ENCODE measurements at regions of chr2 and their contacts with region 1.

Region 1: GRCh38 chr2:174577967-174578589 is 19.5 kb downstream of the WIPF1 start:
- DNase-seq: peak; percentile 73
- ATAC-seq: peak; percentile 86
- H3K4me3 ChIP-seq: no peak overlapping the region
- H3K27ac ChIP-seq: no peak overlapping the region
- H3K4me1 ChIP-seq: no peaks in the 10 kb centered on the region; the same call in 1 of the 2 replicates
- H3K27me3 ChIP-seq: no peaks in the 10 kb centered on the region
- CTCF ChIP-seq: peak; percentile 86
- POLR2A ChIP-seq: 0 out of 2 replicates have a peak, but pooled peaks have one; percentile 22
- RAD21 ChIP-seq: peak; percentile 90

Region 2: DNA sequence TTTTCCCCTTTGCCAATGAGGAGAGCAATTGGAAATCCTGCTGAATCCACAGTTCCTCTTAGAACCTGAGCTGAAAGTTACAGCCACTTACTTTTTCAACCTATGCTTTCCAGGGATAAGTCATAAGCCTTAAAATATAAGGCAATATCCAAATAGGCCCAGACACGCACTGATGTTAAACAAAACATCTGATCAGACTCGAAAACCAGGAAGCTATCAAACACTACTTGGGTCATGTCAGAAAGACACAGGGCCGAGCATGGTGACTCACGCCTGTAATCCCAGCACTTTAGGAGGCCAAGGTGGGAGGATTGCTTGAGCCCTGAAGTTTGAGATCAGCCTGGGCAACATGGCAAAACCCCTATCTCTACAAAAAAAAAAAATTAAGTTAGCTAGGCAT is 805.0 kb before region 1 on chr2:
- CTCF ChIA-PET with region 1: no interaction called
- POLR2A ChIA-PET with region 1: no interaction called
- dilution Hi-C with region 1: no loop called
- in situ Hi-C with region 1: no loop called
- intact Hi-C with region 1: no loop called
- DNase-seq: no peak
- ATAC-seq: no peak
- H3K4me3 ChIP-seq: no peak overlapping the region
- H3K27ac ChIP-seq: no peak overlapping the region
- H3K4me1 ChIP-seq: no peaks in the 10 kb centered on the region
- H3K27me3 ChIP-seq: peaks cover 16% of the 10 kb centered on the region
- CTCF ChIP-seq: no peak
- POLR2A ChIP-seq: no peak
- RAD21 ChIP-seq: no peak

Region 3: GRCh38 chr2:174688079-174688478 is 110.0 kb after region 1 on chr2:
- CTCF ChIA-PET with region 1: interaction called, 25 read pairs
- POLR2A ChIA-PET with region 1: interaction called, 3 read pairs
- dilution Hi-C with region 1: no loop called
- in situ Hi-C with region 1: loop called (anchors 5 kb)
- intact Hi-C with region 1: loop called (anchors 1 kb)
- DNase-seq: peak; percentile 61
- ATAC-seq: peak; percentile 65
- H3K4me3 ChIP-seq: no peak overlapping the region
- H3K27ac ChIP-seq: no peak overlapping the region
- H3K4me1 ChIP-seq: peaks cover 2% of the 10 kb centered on the region; the same call in 1 of the 2 replicates
- H3K27me3 ChIP-seq: peaks cover 13% of the 10 kb centered on the region
- CTCF ChIP-seq: peak; percentile 61
- POLR2A ChIP-seq: no peak
- RAD21 ChIP-seq: peak; percentile 58

Region 4: GRCh38 chr2:174805803-174806202 is 227.7 kb after region 1 on chr2:
- CTCF ChIA-PET with region 1: no interaction called
- POLR2A ChIA-PET with region 1: no interaction called
- dilution Hi-C with region 1: no loop called
- in situ Hi-C with region 1: no loop called
- intact Hi-C with region 1: no loop called
- DNase-seq: no peak
- ATAC-seq: no peak
- H3K4me3 ChIP-seq: no peak overlapping the region
- H3K27ac ChIP-seq: peak overlapping the region; percentile 9; the same call in 1 of the 2 replicates
- H3K4me1 ChIP-seq: peaks cover 20% of the 10 kb centered on the region
- H3K27me3 ChIP-seq: no peaks in the 10 kb centered on the region
- CTCF ChIP-seq: no peak
- POLR2A ChIP-seq: no peak
- RAD21 ChIP-seq: no peak

Measured in IMR-90 (cell line).